ENCODE measurements at regions of chr14 and their contacts with region 1.

Region 1: DNA sequence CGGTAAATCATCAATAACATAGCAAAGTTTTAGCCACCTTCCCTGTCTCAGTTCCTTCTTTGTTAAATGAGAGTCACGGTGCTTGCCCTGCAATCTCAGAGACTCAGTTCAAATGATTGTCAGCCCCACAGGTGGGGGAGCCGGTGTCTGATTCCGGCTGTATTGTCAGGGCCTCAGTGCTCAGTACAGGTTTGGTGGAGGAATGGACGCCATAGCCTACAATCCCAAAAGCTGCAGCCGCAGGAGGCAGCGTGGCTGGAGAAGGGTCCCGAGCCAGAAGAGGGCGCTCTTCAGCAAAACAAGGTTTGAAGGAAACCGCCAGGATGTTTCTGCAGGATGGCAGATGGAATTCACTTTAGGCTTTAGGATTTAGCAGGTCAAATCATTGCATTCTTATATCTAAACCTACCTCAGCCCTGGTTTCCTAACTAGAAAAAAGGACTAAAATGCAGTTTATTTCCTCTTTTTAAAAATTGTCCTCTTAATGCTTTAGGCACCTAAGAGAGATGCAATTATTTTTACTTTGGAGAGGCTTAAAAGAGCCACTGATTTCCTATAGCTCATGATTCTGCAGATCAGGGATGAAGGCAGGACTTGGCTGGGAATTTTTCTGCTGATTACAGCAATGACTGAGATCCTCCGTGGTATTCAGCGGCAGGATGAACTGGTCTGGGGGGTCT is 29.2 kb downstream of the FOS start:
- DNase-seq: peak; percentile 63
- ATAC-seq: peak; percentile 91
- H3K4me3 ChIP-seq: no peak overlapping the region
- H3K27ac ChIP-seq: no peak overlapping the region
- H3K4me1 ChIP-seq: peaks cover 12% of the 10 kb centered on the region
- H3K27me3 ChIP-seq: peaks cover 0 to 4% of the 10 kb centered on the region in 2 experiments; a peak in 1 of 5 replicates
- CTCF ChIP-seq: peak; percentile 93
- EP300 ChIP-seq: no peak
- POLR2A ChIP-seq: no peak
- RAD21 ChIP-seq: peak; percentile 81

Region 2: DNA sequence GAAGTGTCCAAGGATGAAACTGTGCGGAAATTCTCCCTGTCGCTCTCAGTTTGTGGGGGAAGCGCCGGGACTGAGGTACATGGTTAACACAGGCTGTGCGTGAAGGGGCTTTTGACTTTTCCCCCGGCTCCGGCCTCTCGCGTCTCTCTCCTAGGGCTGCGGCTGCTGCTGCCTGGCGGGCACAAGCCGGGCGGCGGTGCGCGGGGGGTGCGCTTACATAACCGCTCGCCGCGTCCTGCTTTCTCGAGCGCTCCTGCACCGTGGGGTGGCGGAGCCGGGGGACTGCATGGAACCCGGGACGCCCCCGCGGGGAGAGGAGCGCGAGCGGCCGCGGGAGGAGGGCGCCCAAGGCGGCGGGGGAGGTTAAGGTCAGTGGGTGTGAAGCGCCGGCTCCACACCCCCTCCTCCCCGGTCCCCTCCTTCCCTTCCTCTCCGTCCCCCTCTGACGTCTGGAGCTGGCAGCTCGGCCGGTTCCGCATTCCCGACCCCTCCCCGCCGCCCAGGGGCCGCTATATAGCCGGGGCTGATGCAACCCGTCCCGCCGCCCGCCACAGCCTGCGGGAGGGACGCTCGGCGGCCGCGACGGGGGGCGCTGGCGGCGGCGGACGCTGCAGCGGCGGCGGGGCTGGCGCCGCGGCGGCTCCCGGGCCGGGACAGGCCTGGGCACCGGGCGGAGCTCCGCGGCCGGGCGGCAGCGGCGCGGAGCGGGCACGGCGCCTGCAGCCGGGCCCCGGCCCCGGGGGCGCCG is 119.8 kb after region 1 on chr14 and contains the start of gene JDP2:
- CTCF ChIA-PET with region 1: no interaction called
- POLR2A ChIA-PET with region 1: no interaction called
- in situ Hi-C with region 1: no loop called
- intact Hi-C with region 1: loop called (anchors 5 kb)
- DNase-seq: peak; percentile 60
- ATAC-seq: peak; percentile 72
- H3K4me3 ChIP-seq: peak within 1 kb of the TSS; percentile 78 to 80 (median 79)
- H3K27ac ChIP-seq: no peak within 1 kb of the TSS
- H3K4me1 ChIP-seq: peaks cover 41% of the 10 kb centered on the region
- H3K27me3 ChIP-seq: peaks cover 0 to 5% of the 10 kb centered on the region in 2 experiments; a peak in 2 of 5 replicates
- CTCF ChIP-seq: peak; percentile 17; the same call in 1 of the 2 replicates
- EP300 ChIP-seq: no peak
- POLR2A ChIP-seq: no peak; a peak in 1 of 4 replicates
- RAD21 ChIP-seq: no peak
- total RNA-seq, gene JDP2: 7.7 and 8.9 TPM in 2 replicates